Activated CD4-positive, alpha-beta memory T cell treated with anti-CD3 and anti-CD28 coated beads for 36 hours (primary cell): ENCODE measurements at regions of chr17 and their contacts with region 1.

Region 1: DNA sequence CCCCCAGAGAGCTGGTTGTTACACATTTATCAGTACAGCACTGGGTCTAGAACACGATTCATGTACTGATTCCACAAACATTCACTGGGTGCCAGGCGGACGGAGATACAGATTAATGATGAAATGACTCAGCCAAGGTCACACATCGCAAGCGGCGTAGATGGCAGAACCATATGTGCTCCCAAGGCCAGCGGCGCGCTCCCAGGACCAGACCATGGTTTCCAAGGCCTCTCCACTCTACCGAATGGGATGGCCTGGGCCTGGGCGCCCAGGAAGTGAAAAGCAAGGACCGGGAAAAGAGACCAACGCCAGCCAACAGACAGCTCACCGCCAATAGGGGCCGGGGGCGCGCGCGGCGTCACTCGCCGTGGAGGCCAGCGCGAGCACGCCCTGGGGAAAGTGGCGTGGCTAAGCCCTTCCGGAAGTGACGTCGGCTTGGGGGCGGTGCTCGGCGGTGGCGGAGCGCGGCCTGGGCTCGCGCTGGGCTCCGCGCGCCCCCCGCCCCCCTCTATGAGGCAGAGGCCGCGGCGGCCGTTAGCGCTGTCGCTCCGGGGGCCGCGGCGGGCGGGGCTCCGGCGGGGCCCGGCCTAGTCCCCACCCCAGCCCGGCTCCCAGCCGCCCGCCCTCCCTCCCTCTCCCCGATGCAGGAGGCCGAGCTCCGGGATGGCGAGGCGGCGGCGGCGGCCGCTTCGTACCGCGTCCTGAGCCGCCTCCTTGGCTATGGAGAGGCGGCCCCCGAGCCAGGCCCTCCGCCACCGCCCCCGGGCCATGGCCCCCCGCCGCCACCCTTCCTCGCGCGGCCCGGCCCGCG is at the start of gene SOCS7:
- DNase-seq: peak; percentile 93
- H3K4me3 Mint-ChIP-seq: peak within 1 kb of the TSS; percentile 94
- H3K27ac Mint-ChIP-seq: peak within 1 kb of the TSS; percentile 90
- H3K4me1 Mint-ChIP-seq: peaks cover 50% of the 10 kb centered on the region
- H3K27me3 Mint-ChIP-seq: no peaks in the 10 kb centered on the region
- total RNA-seq, gene SOCS7: 18.1 to 21.7 TPM

Region 2: GRCh38 chr17:38322091-38322779 is 29.4 kb before region 1 on chr17:
- CTCF ChIA-PET with region 1: interaction called, 23 read pairs
- POLR2A ChIA-PET with region 1: no interaction called
- intact Hi-C with region 1: no loop called
- DNase-seq: peak; percentile 76
- H3K4me3 Mint-ChIP-seq: no peak overlapping the region
- H3K27ac Mint-ChIP-seq: no peak overlapping the region
- H3K4me1 Mint-ChIP-seq: no peaks in the 10 kb centered on the region
- H3K27me3 Mint-ChIP-seq: no peaks in the 10 kb centered on the region

Region 3: GRCh38 chr17:38379438-38379837 is 27.8 kb after region 1 on chr17:
- CTCF ChIA-PET with region 1: interaction called, 14 read pairs
- POLR2A ChIA-PET with region 1: interaction called, 3 read pairs
- intact Hi-C with region 1: no loop called
- DNase-seq: no peak
- H3K4me3 Mint-ChIP-seq: no peak overlapping the region
- H3K27ac Mint-ChIP-seq: no peak overlapping the region
- H3K4me1 Mint-ChIP-seq: no peaks in the 10 kb centered on the region
- H3K27me3 Mint-ChIP-seq: no peaks in the 10 kb centered on the region

Region 4: DNA sequence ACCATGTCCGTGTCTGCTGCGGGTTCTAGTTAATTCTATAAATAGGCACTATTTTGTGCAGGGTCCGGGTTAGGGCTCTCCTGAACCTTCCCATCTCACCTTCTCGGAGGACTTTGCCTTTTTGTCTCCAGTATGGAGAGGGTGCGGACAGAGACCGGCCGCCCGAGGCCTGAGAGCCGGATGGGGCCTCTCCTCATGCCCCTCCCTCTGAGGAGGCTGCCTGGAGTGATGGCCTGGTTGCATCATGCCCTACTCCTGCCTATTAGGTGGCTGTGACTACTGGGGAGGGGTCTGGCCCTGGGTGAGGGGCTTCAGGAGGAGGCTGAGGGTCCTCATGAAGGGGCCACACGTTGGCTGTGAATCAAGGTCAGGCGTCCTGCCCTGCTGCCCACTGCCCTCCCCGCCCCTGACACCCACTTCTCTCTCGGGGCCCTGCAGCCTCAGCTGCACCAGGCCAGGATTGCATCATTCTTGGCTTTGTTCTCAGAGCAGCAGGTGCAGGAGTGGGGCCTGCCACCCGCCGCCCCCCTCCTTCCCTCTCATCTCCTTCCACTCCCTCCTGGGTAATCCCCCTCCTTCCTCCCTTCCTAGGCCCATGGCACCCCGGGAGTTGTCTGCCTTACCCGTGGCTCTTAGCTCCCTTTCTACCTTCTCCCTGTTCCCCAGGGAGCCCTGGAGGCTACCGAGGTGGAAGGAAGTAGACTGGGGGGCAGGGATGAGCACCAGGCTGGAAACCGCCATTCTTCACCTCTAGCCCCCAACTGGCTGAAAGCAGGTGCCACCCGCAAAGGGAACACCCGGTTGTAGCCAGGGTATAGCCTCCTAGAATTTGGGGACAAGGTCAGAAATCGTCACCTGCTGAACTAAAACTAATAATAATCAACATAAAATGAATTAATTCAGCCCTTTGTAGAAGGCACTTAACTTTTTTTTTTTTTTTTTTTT is 63.9 kb after region 1 on chr17:
- CTCF ChIA-PET with region 1: interaction called, 265 read pairs
- POLR2A ChIA-PET with region 1: interaction called, 7 read pairs
- intact Hi-C with region 1: loop called (anchors 1 kb)
- DNase-seq: peak; percentile 48
- H3K4me3 Mint-ChIP-seq: peak overlapping the region; percentile 67
- H3K27ac Mint-ChIP-seq: peak overlapping the region; percentile 67
- H3K4me1 Mint-ChIP-seq: peaks cover 10% of the 10 kb centered on the region
- H3K27me3 Mint-ChIP-seq: peaks cover 29% of the 10 kb centered on the region

Region 5: DNA sequence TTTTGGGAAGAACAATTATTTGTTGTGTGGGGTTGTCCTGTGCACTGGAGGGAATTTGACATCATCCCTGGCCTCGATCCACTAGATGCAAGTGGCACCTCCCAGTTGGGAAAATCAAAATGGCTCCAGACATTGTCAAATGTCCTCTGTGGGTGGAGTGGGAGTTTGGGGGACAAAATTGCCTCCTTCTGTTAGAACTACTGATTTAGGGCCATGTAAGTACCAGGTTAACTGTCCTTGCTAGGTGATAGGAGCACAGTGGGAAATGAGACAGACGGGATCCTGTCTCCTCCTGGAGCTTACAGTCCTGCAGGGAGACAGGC is 133.5 kb after region 1 on chr17:
- CTCF ChIA-PET with region 1: interaction called, 3 read pairs
- POLR2A ChIA-PET with region 1: no interaction called
- intact Hi-C with region 1: loop called (anchors 5 kb)
- DNase-seq: no peak
- H3K4me3 Mint-ChIP-seq: peak overlapping the region; percentile 36
- H3K27ac Mint-ChIP-seq: peak overlapping the region; percentile 63
- H3K4me1 Mint-ChIP-seq: peaks cover 11% of the 10 kb centered on the region
- H3K27me3 Mint-ChIP-seq: peaks cover 1% of the 10 kb centered on the region